Body of pancreas (tissue), 4 donors: ENCODE measurements at regions of chr14 and their contacts with region 1.

Region 1: DNA sequence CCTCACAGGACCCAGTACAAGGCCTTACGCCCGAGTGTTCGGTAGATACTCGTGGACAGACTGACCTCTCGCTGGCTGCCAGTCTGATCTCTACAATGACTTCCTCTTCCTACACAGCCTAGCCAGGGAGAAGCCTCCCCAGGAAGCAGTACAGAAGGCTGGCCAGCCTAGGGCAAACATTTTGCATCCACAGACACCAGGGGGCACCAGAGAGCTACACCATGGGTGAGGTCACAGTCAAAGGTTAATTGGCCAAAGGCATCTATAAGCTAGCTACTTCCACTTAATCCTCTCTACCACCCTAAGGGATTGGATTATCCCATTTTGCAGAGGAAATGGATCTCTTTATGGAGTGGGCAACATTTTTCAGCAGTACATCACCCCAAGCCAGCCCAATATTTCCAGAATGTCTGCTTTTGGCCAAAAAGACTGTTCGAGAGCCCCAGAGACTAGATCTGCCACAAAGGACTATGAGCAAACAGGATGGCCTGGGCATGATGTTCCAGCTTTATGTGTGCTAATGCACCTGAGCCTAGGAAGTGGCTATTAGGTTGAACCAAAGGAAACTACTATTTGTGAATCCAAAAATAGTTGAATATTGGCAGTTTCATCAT is 14.6 kb upstream of the PNMA1 start:
- DNase-seq: peak; percentile 84 to 89 (median 87)
- ATAC-seq: peak; percentile 79
- H3K4me3 ChIP-seq: no peak overlapping the region
- H3K27ac ChIP-seq: peak overlapping the region in 3 of 4 donors; percentile 6 to 51 (median 14)
- H3K4me1 ChIP-seq: peaks cover 18% of the 10 kb centered on the region
- H3K27me3 ChIP-seq: no peaks in the 10 kb centered on the region
- CTCF ChIP-seq: peak; percentile 86 to 97 (median 94)
- POLR2A ChIP-seq: no peak

Region 2: GRCh38 chr14:73651005-73651404 is 77.8 kb before region 1 on chr14:
- intact Hi-C with region 1: no loop called
- DNase-seq: no peak
- ATAC-seq: no peak
- H3K4me3 ChIP-seq: no peak overlapping the region
- H3K27ac ChIP-seq: no peak overlapping the region
- H3K4me1 ChIP-seq: peaks cover 2% of the 10 kb centered on the region
- H3K27me3 ChIP-seq: no peaks in the 10 kb centered on the region
- CTCF ChIP-seq: no peak
- POLR2A ChIP-seq: no peak

Region 3: DNA sequence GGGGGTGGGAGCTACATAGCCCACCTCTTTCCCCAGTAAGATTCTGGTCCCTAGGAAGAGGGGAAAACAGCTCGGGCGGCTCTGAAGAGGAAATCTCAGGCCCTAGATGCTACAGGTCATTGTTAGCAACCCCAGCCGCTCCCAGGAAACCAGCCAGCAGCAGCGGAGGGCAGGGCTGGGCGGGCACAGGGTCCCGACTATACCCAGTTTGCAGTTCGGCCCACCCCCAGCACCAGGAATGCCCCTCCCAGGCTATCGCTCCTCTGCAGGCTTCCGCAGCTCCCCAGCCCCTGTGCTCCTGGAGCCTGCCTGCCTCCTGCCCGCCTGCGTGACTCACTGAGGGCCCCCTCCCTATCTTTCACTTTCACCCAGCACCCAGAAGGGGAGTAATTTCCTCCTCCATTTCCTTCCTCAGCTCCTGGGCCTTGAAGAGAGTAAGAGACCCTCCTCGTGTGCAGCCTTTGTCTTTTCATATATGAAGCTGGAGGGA is 12.6 kb after region 1 on chr14:
- intact Hi-C with region 1: no loop called
- DNase-seq: peak in 3 of 4 donors; percentile 50 to 64 (median 58)
- ATAC-seq: peak; percentile 38
- H3K4me3 ChIP-seq: no peak overlapping the region
- H3K27ac ChIP-seq: peak overlapping the region; percentile 57 to 78 (median 73)
- H3K4me1 ChIP-seq: peaks cover 77% of the 10 kb centered on the region
- H3K27me3 ChIP-seq: no peaks in the 10 kb centered on the region
- CTCF ChIP-seq: no peak
- POLR2A ChIP-seq: no peak

Region 4: DNA sequence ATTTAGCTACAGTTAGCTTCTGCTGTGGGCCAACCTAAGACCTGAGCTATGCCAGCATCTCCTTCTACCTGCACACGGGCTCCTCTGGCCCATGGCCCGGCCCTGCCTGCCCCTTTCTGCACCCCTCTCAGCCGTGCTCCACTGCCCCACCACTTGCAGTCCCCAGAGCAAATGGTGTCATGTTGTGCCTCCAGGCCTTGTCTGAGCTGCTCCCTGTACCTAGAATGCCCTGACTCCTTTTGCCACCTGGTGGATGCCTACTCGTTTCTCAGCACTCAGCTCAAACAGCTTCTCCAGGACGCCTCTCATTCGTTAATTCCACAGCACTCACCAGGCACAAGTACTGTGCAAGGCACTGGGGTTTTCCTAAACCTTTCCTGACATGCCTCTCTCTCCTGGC is 48.6 kb after region 1 on chr14:
- intact Hi-C with region 1: no loop called
- DNase-seq: no peak
- ATAC-seq: no peak
- H3K4me3 ChIP-seq: no peak overlapping the region
- H3K27ac ChIP-seq: no peak overlapping the region
- H3K4me1 ChIP-seq: peaks cover 39% of the 10 kb centered on the region
- H3K27me3 ChIP-seq: no peaks in the 10 kb centered on the region
- CTCF ChIP-seq: peak in 1 of 7 experiments; percentile 34
- POLR2A ChIP-seq: no peak

Region 5: GRCh38 chr14:73825551-73826188 is 96.8 kb after region 1 on chr14:
- intact Hi-C with region 1: loop called (anchors 5 kb)
- DNase-seq: peak; percentile 93 to 96 (median 94)
- ATAC-seq: peak; percentile 98
- H3K4me3 ChIP-seq: no peak overlapping the region
- H3K27ac ChIP-seq: no peak overlapping the region
- H3K4me1 ChIP-seq: peaks cover 8% of the 10 kb centered on the region
- H3K27me3 ChIP-seq: no peaks in the 10 kb centered on the region
- CTCF ChIP-seq: peak; percentile 73 to 93 (median 87)
- POLR2A ChIP-seq: no peak

Region 6: DNA sequence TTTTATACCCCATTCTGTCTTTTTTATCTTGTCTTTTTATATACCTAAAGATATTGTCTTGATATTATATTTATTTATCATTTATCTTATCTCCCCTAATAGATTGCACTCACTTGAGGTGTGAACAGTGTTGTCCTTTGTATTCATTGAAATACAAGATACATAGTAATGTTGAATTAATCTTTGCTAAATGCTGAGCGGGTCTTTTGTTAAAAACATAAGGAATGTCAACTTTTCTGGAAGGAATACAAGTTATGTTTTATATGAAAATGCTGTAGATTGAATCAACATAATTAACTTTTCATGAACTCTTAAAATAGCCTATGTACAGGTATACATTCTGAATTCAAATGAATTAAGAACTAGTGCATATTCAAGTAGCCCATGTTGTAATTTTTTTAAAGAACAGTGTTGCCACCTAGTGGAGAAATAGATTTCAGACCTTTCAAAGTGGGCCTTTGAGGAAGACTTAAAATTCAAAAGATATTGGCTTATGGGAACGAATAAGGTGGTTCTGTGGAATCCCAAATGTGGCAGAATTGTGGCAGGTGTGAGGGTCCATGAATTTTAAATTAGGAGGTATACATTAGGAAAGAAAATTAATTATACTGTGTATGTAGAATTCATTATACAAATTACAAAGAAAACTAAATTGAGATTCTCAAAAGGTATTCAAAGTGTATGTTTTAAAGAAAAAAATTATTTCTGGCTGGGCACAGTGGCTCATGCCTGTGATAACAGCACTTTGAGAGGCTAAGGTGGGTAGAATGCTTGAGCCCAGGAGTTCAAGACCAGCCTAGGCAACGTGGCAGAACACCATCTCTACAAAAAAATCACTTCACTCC is 309.4 kb after region 1 on chr14:
- intact Hi-C with region 1: loop called (anchors 10 kb)
- DNase-seq: peak in 1 of 4 donors; percentile 21
- ATAC-seq: peak; percentile 48
- H3K4me3 ChIP-seq: no peak overlapping the region
- H3K27ac ChIP-seq: no peak overlapping the region
- H3K4me1 ChIP-seq: no peaks in the 10 kb centered on the region
- H3K27me3 ChIP-seq: no peaks in the 10 kb centered on the region
- CTCF ChIP-seq: peak; percentile 28 to 71 (median 64)
- POLR2A ChIP-seq: no peak